HEK293 (cell line): ENCODE measurements at regions of chr6 and their contacts with region 1.

Region 1: DNA sequence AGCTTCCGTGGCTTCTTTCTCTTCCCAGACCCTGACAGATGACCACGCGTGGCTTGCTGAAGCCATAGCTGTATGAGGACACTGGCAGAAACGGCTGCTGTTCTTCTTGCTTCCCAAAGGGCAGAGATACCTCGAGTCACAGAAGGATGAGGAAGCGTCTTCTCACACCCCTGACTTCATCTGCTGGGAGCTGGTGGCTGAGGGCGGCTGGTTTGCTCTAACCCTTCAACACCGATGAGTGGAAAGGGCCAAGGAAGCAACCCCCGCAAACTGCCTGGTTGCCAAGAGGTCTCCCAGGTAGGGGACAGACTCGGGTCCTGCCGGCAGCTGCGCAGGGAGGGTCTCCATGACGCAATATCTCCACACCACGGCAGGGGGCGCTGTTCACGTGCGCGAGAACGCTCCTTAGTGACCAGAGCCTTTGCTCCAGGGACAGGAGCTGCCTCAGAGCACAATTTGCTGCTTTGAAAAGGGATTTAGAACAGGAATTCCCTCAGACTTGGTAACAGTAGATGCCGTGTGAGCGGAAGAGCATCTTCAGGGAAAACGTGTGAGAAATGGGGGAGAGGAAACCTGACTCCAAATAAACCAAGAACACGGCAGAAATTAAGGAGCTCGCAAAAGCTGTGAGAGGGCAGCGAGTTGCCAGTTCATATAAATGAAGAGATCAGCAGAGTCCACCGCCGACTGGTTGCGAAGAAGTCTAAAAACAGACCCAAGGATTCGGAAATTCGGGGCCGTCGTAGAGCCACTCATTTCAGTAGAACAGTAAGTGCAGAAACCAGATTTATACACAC is 80.2 kb downstream of the ERMARD start:
- H3K4me3 ChIP-seq: no peak overlapping the region
- H3K27ac ChIP-seq: no peak overlapping the region
- H3K4me1 ChIP-seq: no peaks in the 10 kb centered on the region
- CTCF ChIP-seq: peak; percentile 80

Region 2: DNA sequence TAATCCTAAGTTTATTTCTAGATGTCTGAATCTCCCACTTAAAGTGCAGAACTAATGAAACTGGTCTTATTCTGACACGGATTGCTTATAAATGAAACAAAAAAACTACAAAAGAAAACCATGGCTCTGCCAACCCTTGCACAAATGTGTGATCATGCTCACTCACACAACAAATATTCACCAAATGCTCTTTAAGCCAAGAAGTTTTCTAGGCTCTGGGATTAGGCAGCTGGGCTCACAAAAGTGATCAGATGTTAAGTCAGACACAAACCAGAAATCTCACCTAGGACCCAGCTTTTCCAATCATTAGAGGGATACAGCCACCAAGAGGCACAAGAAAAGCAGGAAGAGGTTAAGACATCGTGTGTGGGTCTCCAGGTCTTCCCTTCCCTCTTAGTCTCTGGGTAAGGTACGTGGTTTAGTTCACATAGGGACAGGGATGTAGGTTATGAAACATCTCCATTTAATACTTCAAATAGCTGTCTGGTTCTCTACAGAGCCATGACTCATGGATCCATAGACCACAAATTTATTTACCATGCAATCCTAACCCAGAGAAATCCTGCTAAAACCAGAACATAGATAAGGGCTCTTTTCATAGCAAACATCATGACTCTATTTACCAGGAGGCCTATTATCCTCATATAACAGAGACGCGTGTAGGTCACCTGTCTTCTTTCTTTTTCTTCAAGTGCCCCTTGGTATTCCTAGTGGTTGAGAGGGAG is 295.0 kb before region 1 on chr6:
- CTCF ChIA-PET with region 1: no interaction called
- POLR2A ChIA-PET with region 1: no interaction called
- H3K4me3 ChIP-seq: no peak overlapping the region
- H3K27ac ChIP-seq: no peak overlapping the region
- H3K4me1 ChIP-seq: no peaks in the 10 kb centered on the region
- CTCF ChIP-seq: no peak

Region 3: DNA sequence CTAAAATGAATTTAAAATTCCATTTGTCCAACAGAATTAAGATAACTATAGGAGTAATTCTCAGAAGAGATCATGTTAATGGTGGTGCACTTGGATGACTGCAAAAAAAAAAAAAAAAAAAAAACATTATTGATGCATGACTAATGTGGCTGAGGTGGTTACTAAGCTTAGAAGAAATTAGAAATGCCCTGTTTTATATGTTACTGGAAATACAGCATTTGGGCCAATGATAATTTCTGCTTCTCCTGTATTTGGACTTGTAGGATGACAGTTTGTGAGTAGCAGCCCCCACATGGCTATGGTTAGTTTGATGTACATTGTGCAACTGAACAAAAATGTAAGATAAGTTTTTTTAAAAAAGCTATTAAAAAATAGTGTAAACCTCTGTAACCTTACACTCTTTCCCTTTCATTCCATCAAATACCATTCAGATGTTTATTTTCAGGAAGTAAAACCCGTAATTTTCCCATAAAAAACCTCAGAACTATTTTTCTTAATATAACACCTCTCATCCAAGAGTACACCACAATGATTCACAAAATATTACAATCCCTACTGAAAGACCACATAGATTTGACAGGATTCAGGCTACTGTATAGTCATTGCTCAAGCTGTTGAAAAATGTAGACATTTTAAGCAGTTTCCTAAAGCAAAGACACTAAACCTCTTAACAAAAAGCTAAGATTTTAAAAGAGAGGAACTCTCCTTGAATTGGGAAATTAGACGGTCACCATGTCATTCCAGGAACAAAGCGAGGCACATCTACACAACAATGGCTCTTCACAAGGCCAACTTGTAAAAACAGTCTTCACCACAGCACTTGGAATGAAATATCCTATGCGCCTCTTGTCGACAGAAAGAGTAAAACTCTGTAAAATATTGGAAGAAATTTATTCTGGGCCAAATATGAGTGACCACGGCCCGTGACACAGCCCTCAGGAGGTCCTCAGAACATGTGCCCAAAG is 212.8 kb before region 1 on chr6:
- CTCF ChIA-PET with region 1: no interaction called
- POLR2A ChIA-PET with region 1: no interaction called
- H3K4me3 ChIP-seq: no peak overlapping the region
- H3K27ac ChIP-seq: no peak overlapping the region
- H3K4me1 ChIP-seq: no peaks in the 10 kb centered on the region
- CTCF ChIP-seq: no peak

Region 4: GRCh38 chr6:169789982-169790927 is 41.4 kb before region 1 on chr6:
- CTCF ChIA-PET with region 1: interaction called, 32 read pairs
- POLR2A ChIA-PET with region 1: no interaction called
- H3K4me3 ChIP-seq: peak overlapping the region; percentile 43
- H3K27ac ChIP-seq: no peak overlapping the region; the same call in 1 of the 2 replicates
- H3K4me1 ChIP-seq: 0 out of 2 replicates have a peak, but pooled peaks cover 5% of the 10 kb centered on the region
- CTCF ChIP-seq: peak; percentile 98

Region 5: DNA sequence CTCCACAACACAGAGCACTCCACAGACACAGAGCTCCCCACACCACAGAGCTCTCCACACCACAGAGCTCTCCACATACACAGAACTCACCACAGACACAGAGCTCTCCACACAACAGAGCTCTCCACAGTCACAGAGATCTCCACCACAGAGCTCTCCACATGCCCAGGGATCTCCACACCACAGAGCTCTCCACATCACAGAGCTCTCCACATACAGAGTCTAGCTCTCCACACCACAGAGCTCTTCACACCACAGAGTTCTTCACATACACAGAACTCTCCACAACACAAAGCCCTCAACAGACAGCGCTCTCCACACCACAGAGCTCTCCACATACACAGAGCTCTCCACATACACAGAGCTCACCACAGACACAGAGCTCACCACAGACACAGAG is 24.9 kb before region 1 on chr6:
- CTCF ChIA-PET with region 1: interaction called, 14 read pairs
- POLR2A ChIA-PET with region 1: no interaction called
- H3K4me3 ChIP-seq: no peak overlapping the region
- H3K27ac ChIP-seq: no peak overlapping the region
- H3K4me1 ChIP-seq: no peaks in the 10 kb centered on the region
- CTCF ChIP-seq: no peak

Region 6: DNA sequence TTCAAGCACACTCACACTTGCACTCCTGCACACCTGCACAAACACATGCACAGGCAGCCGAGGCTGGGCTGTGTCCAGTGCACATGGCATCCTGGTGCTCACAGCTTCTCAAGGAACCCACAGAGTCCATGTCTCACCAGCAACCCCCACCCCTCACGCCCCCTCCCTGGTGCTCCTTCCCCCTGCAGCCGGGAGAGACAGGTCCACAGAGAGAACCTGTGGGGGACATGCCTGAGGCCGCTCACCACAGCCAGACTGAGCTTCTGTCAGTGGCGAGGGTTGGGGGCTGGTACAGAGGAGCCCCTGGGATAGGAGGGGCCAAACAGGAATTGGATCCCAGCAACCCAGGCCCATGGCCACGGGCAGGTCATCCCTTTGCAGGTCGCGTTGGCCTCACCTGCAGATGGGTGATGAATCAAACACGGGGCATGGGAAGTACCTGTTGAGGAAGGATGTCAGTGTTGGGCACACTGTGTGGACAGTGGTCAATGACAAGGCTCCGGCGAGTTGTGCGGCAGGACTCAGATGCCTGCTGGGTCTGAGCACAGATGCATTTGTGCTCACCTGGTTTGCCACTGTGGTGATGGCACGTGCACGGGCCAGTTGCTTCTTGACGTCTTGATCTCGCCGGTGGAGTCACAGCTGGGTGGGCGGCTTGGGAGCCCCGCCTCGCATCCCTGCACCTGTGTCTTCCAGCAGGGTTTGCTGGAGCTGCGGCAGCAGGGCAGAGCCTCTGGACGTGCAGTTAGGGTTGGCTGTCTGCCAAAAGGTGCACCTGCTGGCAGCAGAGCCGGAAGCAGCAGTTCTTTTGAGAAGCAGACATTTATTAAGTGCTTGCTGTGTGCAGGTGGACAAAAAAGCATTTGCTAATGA is 32.7 kb after region 1 on chr6:
- CTCF ChIA-PET with region 1: interaction called, 11 read pairs
- POLR2A ChIA-PET with region 1: no interaction called
- H3K4me3 ChIP-seq: no peak overlapping the region
- H3K27ac ChIP-seq: no peak overlapping the region
- H3K4me1 ChIP-seq: no peaks in the 10 kb centered on the region
- CTCF ChIP-seq: no peak

Region 7: DNA sequence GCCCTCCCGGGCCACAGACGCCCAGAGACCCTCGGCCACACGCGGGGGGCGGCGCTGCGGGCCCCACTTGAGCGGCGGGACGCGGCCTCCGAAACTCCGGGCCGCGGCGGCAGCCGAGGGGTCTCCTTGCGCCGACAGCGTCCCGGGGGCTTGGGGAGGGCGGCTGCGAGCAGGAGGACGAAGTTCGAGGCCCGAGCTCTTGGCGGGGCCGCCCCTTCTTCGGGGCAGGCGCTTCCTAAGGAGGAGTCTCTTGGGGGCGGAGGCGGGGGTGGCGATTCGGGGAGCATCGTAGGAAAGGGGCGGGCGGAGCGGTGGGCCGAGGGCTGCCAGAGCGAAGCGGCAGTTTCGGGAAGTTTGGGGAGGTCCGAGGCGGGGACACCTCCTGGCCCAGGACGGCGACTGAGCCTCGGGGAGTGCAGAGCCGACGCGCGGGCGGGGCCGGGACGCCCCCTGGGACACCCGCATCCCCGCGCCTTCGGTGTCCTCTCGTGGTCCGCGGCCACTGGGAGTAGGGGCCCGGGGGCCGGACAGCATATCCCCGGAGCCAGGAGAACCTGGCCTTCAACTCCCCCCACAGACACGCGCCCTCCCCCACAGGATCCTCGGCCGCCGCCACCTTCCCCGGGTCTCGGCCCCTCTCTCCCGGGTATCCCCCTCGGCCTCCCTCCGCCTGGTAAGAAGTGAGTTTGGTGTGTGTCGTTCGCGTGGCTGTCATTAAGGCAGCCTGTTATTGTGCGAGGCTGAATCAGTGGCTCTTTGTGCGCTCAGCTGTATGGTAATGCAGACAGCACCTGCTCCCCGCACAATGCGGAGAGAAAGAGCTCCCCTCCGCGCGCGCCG is 459.8 kb after region 1 on chr6:
- CTCF ChIA-PET with region 1: interaction called, 21 read pairs
- POLR2A ChIA-PET with region 1: no interaction called
- H3K4me3 ChIP-seq: peak overlapping the region; percentile 24
- H3K27ac ChIP-seq: peak overlapping the region; percentile 50; the same call in 1 of the 2 replicates
- H3K4me1 ChIP-seq: peaks cover 8% of the 10 kb centered on the region
- CTCF ChIP-seq: no peak

Region 8: DNA sequence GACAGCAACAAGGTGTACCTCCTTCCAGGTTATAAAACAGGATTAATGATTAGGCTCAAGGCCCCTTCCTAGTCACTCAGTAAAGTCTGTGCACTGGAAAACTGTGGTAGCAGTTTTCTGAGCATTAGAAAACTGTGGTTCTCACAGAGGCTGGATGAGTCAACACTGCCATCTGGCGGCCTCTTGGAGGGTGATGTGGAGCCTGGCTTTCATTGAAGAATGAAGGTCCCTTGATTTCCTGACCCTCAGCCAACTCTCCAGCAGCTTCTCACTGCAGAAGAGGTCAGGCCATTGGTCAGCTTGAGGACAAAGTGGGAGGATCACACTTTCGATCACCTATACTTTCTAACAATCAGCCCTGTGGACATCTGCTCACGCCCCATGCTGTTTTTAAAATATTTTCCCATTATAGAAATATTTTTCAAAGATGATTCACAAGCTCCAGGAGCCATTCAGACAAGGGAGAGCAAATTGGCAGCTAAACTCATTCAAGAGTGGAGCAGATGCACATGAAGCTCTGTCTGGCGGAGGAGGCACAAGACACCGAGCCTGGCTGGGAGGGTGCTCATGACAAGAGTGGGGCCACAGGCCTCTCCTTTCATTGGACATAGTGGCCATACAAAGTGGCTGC is 698.3 kb after region 1 on chr6:
- CTCF ChIA-PET with region 1: interaction called, 68 read pairs
- POLR2A ChIA-PET with region 1: no interaction called
- H3K4me3 ChIP-seq: no peak overlapping the region
- H3K27ac ChIP-seq: no peak overlapping the region
- H3K4me1 ChIP-seq: 0 out of 2 replicates have a peak, but pooled peaks cover 3% of the 10 kb centered on the region
- CTCF ChIP-seq: peak; percentile 64